Left ventricle myocardium superior (tissue), 1 donor: ENCODE measurements at regions of chr2 and their contacts with region 1.

Region 1: GRCh38 chr2:219521066-219521880 is 7.0 kb downstream of the ASIC4 start:
- DNase-seq: peak; percentile 64
- ATAC-seq: peak; percentile 71

Region 2: GRCh38 chr2:219402665-219403515 is 118.4 kb before region 1 on chr2:
- intact Hi-C with region 1: loop called (anchors 10 kb)
- DNase-seq: peak; percentile 62
- ATAC-seq: no peak